Dendritic cell treated with granulocyte-macrophage colony-stimulating factor and Interleukin-4, amounts not matched to agents 40 ng/mL and 50 ng/mL, for 4 days (primary cell): ENCODE measurements at regions of chr16 and their contacts with region 1.

Region 1: DNA sequence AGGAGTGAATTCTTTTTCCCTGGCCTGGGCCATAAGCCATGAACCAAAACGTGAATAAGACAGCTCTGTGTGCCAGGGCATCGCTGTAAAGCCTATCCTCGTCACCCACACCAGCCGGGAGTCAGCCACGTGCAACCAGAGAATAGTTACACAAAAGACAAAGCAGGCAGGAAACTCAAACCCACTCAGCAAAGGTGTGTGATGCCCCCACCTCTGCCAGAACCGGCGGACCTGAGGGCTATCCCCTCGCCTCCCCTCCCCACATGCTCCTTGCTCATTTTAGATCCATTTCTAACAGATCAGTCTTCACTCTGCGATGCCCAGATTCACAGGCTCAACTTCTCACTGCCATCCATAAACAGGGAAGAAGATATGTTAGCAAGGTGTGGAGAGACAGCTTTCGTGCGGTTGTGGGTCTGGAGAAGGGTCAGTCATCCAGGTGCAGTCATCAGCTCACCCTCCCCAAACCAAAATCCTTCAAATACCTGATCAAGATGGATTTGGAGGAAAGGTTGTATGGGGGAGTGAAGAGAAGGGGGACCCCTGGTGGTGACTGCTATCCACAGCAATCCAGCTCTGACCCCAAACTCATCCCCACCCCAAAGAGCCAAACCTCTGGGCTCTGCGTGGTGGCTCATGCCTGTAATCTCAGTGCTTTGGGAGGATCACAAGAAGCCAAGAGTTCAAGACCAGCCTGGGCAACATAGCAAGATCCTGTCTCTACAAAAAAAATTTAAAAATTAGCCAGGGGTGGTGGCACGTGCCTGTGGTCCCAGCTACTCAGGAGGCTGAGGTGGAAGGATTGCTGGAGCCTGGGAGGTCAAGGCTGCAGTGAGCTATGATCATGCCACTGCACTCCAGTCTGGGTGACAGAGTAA is 219.2 kb downstream of the C16orf78 start:
- H3K4me3 Mint-ChIP-seq: no peak overlapping the region
- H3K27ac Mint-ChIP-seq: no peak overlapping the region
- H3K4me1 Mint-ChIP-seq: peaks cover 6% of the 10 kb centered on the region
- H3K27me3 Mint-ChIP-seq: peaks cover 2% of the 10 kb centered on the region

Region 2: DNA sequence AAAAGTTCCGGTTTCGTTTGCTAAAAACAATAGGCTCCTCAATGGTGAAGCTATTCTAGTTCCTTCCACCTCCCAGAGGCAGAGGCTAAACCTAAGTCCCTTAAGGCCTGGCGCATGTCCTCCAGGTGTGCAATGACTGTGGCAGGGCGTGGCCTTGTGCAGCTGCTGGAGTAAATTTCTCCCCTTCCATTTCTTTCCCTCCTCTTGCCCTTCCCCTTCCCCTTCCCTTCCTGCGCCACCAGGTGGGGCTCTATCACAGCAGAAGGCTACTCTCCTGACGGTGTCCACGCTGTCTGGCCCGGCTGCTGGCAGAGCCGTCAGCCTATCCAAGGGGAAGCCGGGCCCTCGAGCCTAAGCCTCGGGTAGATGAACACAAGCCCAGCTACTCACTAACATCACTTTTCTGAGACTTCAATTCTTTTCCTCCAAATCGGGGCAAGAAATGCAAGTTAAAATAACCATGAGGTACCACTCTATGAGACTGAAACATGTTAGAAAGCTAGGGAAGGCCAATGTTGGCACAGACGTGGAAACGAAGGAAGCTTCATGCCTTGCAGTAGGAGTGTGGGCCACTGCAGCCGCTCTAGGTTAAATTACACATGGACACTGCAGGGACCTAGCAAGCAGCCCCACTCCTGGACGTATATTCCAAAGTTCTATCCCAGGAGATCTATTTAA is 184.8 kb before region 1 on chr16:
- intact Hi-C with region 1: loop called (anchors 5 kb)
- H3K4me3 Mint-ChIP-seq: no peak overlapping the region
- H3K27ac Mint-ChIP-seq: no peak overlapping the region
- H3K4me1 Mint-ChIP-seq: no peaks in the 10 kb centered on the region
- H3K27me3 Mint-ChIP-seq: no peaks in the 10 kb centered on the region

Region 3: DNA sequence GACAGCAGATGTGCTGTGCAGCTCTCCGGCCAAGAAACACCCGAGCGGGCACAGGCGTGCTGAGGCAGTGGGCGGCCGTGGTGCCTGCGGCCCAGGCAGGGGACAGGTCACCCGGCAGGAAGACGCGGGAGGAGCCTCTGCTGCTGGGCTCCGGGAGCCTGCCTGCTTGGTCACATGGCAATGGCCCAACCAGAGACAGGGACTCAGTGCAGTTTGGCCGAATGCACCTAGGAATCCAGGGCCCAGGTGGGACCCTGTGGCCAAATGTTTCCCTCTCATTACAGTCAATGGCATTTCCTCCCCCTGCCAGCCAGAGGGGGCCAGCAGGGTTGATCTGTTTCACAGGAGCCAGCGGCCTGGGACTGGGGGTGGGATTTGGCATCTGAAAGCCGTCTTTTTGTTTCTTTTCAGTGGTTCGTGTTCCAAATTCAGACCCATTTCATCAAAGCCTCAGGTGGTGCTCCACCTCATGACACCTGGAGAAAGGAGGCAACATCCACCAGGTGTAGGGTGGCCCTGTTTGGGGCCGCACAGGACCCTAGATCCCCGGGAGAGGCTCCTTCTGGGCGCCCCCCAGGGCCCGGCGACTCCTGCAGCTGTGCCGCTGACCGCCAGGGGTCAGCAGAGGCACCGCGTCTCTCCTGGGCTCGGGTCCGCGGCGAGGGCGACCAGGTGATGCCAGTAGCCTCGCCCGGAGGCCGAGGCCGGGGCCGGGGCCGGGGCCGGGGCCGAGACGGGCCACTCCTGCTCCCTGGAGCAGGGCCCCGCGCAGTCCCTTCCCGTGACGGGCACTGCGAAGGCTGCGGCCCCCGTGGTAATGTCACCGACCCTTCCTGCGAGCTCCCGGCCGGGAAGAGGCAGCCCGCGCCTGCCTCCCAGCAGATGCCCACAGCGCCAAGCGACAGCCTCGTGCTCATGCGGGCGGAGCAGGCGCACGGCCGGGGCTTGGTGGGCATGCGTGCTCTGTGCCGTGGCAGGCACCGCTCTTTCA is 100.7 kb before region 1 on chr16:
- intact Hi-C with region 1: loop called (anchors 1 kb)
- H3K4me3 Mint-ChIP-seq: no peak overlapping the region
- H3K27ac Mint-ChIP-seq: no peak overlapping the region
- H3K4me1 Mint-ChIP-seq: no peaks in the 10 kb centered on the region
- H3K27me3 Mint-ChIP-seq: peaks cover 15% of the 10 kb centered on the region

Region 4: GRCh38 chr16:49513040-49513439 is 79.7 kb before region 1 on chr16:
- intact Hi-C with region 1: loop called (anchors 5 kb)
- H3K4me3 Mint-ChIP-seq: no peak overlapping the region
- H3K27ac Mint-ChIP-seq: no peak overlapping the region
- H3K4me1 Mint-ChIP-seq: no peaks in the 10 kb centered on the region
- H3K27me3 Mint-ChIP-seq: no peaks in the 10 kb centered on the region